GM10248 (cell line): ENCODE measurements at regions of chr14 and their contacts with region 1.

Region 1: GRCh38 chr14:93173943-93174395 is 10.7 kb downstream of the MOAP1 start:
- DNase-seq: no peak
- CTCF ChIP-seq: no peak

Region 2: GRCh38 chr14:92990456-92991430 is 183.2 kb before region 1 on chr14:
- CTCF ChIA-PET with region 1: no interaction called
- POLR2A ChIA-PET with region 1: no interaction called
- DNase-seq: no peak
- CTCF ChIP-seq: no peak

Region 3: DNA sequence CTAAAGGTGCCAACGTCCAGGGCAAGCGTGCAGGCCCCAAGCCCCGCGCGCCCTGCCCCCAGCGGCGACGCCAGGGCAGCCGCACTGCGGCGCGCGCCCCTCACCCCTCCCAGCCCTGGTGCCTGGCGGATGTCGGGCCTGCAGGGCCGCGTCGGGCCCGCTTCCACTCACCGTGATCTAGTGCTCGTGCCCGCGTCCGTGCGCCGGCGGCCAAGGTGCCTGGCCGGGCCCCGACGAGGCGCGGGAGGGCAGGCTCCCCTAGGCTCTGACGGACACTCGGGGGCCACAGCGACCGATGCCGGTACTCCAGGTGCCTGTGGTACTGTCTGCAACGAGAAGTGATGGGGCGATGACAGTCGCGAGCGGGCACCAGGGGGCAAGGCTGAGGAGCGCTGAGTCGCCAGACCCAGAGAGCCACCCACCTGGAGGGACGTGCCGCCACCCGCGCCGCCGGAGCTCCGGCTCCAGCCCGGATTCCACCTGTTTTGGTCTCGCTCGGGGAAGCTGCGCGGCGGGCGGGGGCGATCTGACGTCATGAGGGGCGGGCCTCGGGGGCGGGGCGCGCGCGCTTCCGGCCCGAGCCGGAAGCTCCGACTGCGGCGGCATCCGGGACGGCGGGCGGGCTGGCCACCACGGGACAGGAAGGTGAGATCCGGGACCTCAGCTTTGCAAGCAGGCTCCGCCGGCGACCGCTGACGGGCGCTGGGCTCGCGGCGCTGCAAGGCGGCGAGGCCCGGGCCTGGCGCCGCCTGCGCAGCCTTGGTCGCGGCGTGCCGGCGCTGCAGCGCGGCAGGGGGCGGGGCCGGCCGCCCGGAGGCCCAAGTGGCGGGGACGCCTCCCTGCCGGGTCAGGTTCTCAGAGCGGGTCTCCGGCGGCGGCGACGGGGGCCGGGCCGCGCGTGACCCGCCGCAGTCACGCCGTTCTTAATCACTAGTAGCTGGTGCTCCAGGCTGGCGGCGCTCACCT is 10.7 kb after region 1 on chr14 and contains the starts of genes LYSET and MOAP1:
- CTCF ChIA-PET with region 1: interaction called, 15 read pairs
- POLR2A ChIA-PET with region 1: interaction called, 5 read pairs
- DNase-seq: peak; percentile 94
- CTCF ChIP-seq: peak; percentile 27